Activated naive CD4-positive, alpha-beta T cell treated with anti-CD3 and anti-CD28 coated beads for 36 hours (primary cell): ENCODE measurements at regions of chr1 and their contacts with region 1.

Region 1: DNA sequence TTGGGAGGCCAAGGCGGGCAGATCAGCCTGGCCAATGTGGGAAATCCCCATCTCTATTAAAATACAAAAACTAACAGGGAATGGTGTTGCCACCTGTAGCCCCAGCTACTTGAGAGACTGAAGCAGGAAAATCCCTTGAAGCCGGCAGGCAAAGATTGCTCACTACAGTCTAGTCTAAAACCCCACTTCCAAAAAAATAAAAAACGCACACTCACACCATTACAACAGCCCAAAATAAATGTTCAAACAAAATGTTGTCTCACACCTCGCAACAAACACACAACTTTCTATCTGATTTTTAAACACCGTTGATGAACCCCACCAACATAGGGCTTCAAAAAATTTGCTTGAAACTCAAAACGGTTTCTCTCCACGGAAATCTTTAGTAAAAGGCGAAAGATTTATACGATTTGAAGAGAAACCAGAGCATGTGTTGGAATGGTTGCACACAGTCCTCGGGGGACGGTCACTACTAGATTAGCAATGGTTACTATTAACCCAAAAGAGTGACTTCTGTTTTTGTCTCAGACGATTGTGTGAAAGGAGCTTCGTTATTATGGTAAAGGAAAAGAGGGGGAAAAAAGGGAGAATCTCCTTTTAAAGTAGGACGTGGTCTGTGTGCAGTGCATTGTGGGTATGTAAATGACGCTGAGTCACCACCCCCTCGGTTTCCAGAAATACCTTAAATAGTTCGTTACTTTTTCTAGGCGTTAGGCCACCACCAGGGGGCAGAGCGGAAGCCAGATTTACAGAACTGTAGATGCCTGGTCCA is at the start of gene RNU5D-1:
- DNase-seq: peak; percentile 99
- H3K4me3 Mint-ChIP-seq: peak within 1 kb of the TSS; percentile 57
- H3K27ac Mint-ChIP-seq: peak within 1 kb of the TSS; percentile 99
- H3K4me1 Mint-ChIP-seq: peaks cover 46% of the 10 kb centered on the region
- H3K27me3 Mint-ChIP-seq: peaks cover 3% of the 10 kb centered on the region
- total RNA-seq, gene RNU5D-1: not detected

Region 2: DNA sequence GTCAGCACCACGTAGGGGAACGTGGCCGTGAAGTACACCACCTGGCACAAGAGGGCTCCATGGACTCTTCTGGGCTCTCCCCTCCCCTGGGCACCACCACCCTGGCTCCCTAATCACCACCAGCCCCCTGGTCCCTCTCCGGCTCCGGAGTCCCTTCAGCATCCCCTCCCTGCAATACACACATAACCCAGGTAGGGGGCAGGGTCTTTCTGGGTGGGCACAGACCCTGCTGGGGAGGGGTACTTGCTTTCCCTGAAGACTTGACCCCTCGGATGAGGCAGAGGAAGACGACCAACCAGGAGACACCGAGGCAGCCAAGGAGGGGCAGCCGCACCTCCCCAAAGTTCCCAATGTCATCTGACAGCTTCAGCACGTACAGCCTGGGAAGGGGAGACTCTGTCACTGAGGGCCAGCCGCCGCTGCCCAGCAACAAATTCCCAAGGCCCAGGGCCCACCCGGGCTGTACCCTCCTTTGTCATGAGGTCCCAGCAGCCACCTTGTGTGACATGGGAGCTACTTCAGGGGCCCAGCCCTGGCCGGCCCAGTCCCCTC is 728.2 kb before region 1 on chr1:
- CTCF ChIA-PET with region 1: no interaction called
- intact Hi-C with region 1: no loop called
- DNase-seq: no peak
- H3K4me3 Mint-ChIP-seq: no peak overlapping the region
- H3K27ac Mint-ChIP-seq: no peak overlapping the region
- H3K4me1 Mint-ChIP-seq: no peaks in the 10 kb centered on the region
- H3K27me3 Mint-ChIP-seq: no peaks in the 10 kb centered on the region

Region 3: DNA sequence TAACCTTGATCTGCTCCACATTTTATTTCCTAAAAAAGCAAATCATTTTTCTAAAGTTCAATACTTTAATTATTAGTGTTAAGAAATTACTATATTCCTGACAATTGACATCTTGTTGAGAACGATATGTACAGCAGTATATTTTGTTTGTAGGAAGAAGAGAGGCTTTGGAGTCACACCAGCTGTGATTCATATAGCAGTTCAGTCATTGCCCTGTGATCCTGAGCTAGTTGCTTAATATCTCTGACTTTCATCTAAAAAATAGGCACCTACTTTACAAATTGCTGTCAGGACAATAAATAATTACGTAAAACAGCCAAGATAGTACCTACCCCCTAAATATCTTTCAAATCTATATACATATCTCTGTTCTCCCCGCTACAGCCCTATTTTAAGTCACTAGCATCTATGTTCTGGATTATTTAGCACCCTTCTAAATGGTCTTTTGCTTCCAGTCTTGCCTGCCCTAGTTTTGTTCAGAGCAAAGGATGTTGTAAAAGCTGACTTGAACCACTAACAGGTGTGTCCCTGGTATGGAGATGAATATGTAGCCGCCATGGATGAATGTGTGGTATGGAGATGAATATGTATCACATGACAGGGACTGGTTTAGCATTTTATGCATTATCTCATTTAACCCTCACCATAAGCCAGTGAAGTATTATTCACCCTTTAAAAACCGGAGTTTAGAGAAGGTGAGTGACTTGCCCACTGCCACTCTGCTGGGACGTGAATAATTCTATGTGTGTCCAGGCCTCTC is 283.7 kb before region 1 on chr1:
- CTCF ChIA-PET with region 1: no interaction called
- intact Hi-C with region 1: no loop called
- DNase-seq: no peak
- H3K4me3 Mint-ChIP-seq: no peak overlapping the region
- H3K27ac Mint-ChIP-seq: no peak overlapping the region
- H3K4me1 Mint-ChIP-seq: no peaks in the 10 kb centered on the region
- H3K27me3 Mint-ChIP-seq: peaks cover 4% of the 10 kb centered on the region

Region 4: GRCh38 chr1:44714944-44715571 is 15.9 kb before region 1 on chr1:
- CTCF ChIA-PET with region 1: interaction called, 64 read pairs
- intact Hi-C with region 1: loop called (anchors 2 kb)
- DNase-seq: peak; percentile 81
- H3K4me3 Mint-ChIP-seq: peak overlapping the region; percentile 32
- H3K27ac Mint-ChIP-seq: peak overlapping the region; percentile 21
- H3K4me1 Mint-ChIP-seq: peaks cover 47% of the 10 kb centered on the region
- H3K27me3 Mint-ChIP-seq: no peaks in the 10 kb centered on the region

Region 5: GRCh38 chr1:44786138-44786840 is 55.4 kb after region 1 on chr1:
- CTCF ChIA-PET with region 1: interaction called, 9 read pairs
- intact Hi-C with region 1: loop called (anchors 1 kb)
- DNase-seq: peak; percentile 79
- H3K4me3 Mint-ChIP-seq: peak overlapping the region; percentile 72
- H3K27ac Mint-ChIP-seq: peak overlapping the region; percentile 71
- H3K4me1 Mint-ChIP-seq: peaks cover 25% of the 10 kb centered on the region
- H3K27me3 Mint-ChIP-seq: no peaks in the 10 kb centered on the region

Region 6: GRCh38 chr1:44807262-44808062 is 76.5 kb after region 1 on chr1 and contains the start of gene DYNLT4:
- CTCF ChIA-PET with region 1: interaction called, 9 read pairs
- intact Hi-C with region 1: loop called (anchors 1 kb)
- DNase-seq: peak; percentile 97
- H3K4me3 Mint-ChIP-seq: peak within 1 kb of the TSS; percentile 76
- H3K27ac Mint-ChIP-seq: peak within 1 kb of the TSS; percentile 100
- H3K4me1 Mint-ChIP-seq: peaks cover 93% of the 10 kb centered on the region
- H3K27me3 Mint-ChIP-seq: no peaks in the 10 kb centered on the region
- total RNA-seq, gene DYNLT4: 0.62 to 0.67 TPM

Region 7: GRCh38 chr1:44985747-44986359 is 254.9 kb after region 1 on chr1:
- CTCF ChIA-PET with region 1: interaction called, 6 read pairs
- intact Hi-C with region 1: loop called (anchors 2 kb)
- DNase-seq: no peak
- H3K4me3 Mint-ChIP-seq: peak overlapping the region; percentile 100
- H3K27ac Mint-ChIP-seq: peak overlapping the region; percentile 80
- H3K4me1 Mint-ChIP-seq: peaks cover 23% of the 10 kb centered on the region
- H3K27me3 Mint-ChIP-seq: no peaks in the 10 kb centered on the region

Region 8: DNA sequence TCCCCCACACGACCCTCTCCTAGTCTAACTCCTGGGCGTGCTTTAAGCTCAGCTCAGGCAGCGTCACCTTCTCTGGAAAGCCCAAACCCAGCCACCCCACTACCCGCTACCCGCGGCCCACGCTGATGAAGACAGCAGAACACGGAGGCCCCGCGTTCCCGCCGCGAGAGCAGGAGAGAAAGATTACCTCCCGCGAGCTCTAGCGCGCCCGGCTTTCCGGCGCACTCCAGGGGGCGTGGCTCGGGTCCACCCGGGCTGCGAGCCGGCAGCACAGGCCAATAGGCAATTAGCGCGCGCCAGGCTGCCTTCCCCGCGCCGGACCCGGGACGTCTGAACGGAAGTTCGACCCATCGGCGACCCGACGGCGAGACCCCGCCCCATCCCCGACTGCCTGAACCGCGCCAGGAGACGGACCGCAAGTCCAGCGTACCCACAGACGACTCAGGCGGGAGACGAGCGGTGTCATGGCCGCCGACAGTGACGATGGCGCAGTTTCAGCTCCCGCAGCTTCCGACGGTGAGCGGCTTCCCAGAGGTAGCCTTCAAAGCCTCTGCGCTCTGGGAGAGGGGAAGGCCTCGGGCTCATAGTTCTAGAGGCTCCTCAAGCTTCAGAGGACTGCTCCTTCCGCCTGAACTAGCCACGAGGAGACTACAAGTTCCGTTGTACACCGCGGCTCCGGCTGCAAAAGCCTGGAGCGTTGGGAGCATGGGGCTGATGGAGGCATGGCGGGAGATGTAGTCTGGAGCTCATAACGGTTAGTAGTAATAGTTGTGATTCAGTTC is 609.1 kb after region 1 on chr1 and contains the starts of genes MUTYH and TOE1:
- CTCF ChIA-PET with region 1: interaction called, 3 read pairs
- intact Hi-C with region 1: loop called (anchors 2 kb)
- DNase-seq: peak; percentile 95
- H3K4me3 Mint-ChIP-seq: peak within 1 kb of the TSS; percentile 100
- H3K27ac Mint-ChIP-seq: peak within 1 kb of the TSS; percentile 100
- H3K4me1 Mint-ChIP-seq: peaks cover 35% of the 10 kb centered on the region
- H3K27me3 Mint-ChIP-seq: no peaks in the 10 kb centered on the region
- total RNA-seq, gene MUTYH: 42.0 to 45.0 TPM
- total RNA-seq, gene TOE1: 23.0 to 23.8 TPM